CD4-positive, alpha-beta T cell (primary cell): ENCODE measurements at regions of chr4 and their contacts with region 1.

Region 1: GRCh38 chr4:142045996-142046395 is 409.6 kb downstream of the IL15 start:
- DNase-seq: no peak
- ATAC-seq: no peak
- H3K4me3 ChIP-seq: no peak overlapping the region
- H3K4me3 Mint-ChIP-seq: no peak overlapping the region
- H3K27ac ChIP-seq: no peak overlapping the region
- H3K27ac Mint-ChIP-seq: peak overlapping the region; percentile 3
- H3K4me1 ChIP-seq: no peaks in the 10 kb centered on the region
- H3K4me1 Mint-ChIP-seq: peaks cover 58% of the 10 kb centered on the region
- H3K27me3 ChIP-seq: no peaks in the 10 kb centered on the region
- H3K27me3 Mint-ChIP-seq: no peaks in the 10 kb centered on the region
- CTCF ChIP-seq: no peak

Region 2: DNA sequence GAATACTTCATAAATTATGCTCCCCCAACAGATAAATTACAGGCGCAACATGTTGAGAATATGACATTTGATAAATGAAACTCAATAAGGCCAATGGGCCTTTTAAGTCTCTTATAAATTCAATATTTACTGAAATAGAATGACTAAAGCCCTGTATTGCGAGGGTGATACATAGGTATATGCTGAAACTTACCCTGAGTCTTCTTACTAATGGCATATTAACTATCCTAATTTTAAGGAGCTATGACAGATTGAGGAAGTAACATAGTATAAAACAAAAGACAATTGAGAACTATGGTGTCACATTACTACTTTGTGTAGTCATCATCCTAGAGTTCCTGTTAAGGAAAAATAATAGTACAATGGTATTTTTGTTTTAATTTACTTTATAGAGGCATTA is 31.1 kb after region 1 on chr4:
- CTCF ChIA-PET with region 1: no interaction called
- POLR2A ChIA-PET with region 1: no interaction called
- intact Hi-C with region 1: loop called in 1 of 2 experiments (anchors 2 kb)
- DNase-seq: no peak
- ATAC-seq: no peak
- H3K4me3 ChIP-seq: no peak overlapping the region
- H3K4me3 Mint-ChIP-seq: no peak overlapping the region
- H3K27ac ChIP-seq: no peak overlapping the region
- H3K27ac Mint-ChIP-seq: no peak overlapping the region
- H3K4me1 ChIP-seq: no peaks in the 10 kb centered on the region
- H3K4me1 Mint-ChIP-seq: peaks cover 5% of the 10 kb centered on the region
- H3K27me3 ChIP-seq: no peaks in the 10 kb centered on the region
- H3K27me3 Mint-ChIP-seq: no peaks in the 10 kb centered on the region
- CTCF ChIP-seq: no peak